ENCODE measurements at regions of chr2 and their contacts with region 1.

Region 1: GRCh38 chr2:119011162-119011909 is 69.3 kb downstream of the MARCO start:
- DNase-seq: peak; percentile 58
- ATAC-seq: no peak
- H3K4me3 Mint-ChIP-seq: no peak overlapping the region
- H3K27ac Mint-ChIP-seq: no peak overlapping the region
- H3K4me1 Mint-ChIP-seq: no peaks in the 10 kb centered on the region
- H3K27me3 Mint-ChIP-seq: peaks cover 25% of the 10 kb centered on the region

Region 2: GRCh38 chr2:118112771-118113334 is 898.5 kb before region 1 on chr2:
- CTCF ChIA-PET with region 1: no interaction called
- POLR2A ChIA-PET with region 1: no interaction called
- intact Hi-C with region 1: no loop called
- DNase-seq: no peak
- ATAC-seq: no peak
- H3K4me3 Mint-ChIP-seq: no peak overlapping the region
- H3K27ac Mint-ChIP-seq: peak overlapping the region; percentile 27
- H3K4me1 Mint-ChIP-seq: peaks cover 10% of the 10 kb centered on the region
- H3K27me3 Mint-ChIP-seq: no peaks in the 10 kb centered on the region

Region 3: DNA sequence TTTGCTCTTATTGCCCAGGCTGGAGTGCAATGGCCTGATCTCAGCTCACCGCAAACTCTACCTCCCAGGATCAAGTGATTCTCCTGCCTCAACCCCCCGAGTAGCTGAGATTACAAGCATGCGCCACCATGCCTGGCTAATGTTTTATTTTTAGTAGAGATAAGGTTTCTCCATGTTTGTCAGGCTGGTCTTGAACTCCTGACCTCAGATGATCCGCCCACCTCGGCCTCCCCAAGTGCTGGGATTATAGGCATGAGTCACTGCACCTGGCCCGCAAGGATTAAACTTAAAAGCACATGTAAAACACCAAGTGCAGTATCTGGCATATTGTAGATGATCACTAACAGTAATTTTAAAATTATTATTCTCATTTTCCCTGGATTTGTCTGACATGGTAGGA is 74.3 kb after region 1 on chr2:
- CTCF ChIA-PET with region 1: no interaction called
- POLR2A ChIA-PET with region 1: no interaction called
- intact Hi-C with region 1: no loop called
- DNase-seq: no peak
- ATAC-seq: no peak
- H3K4me3 Mint-ChIP-seq: no peak overlapping the region
- H3K27ac Mint-ChIP-seq: no peak overlapping the region
- H3K4me1 Mint-ChIP-seq: no peaks in the 10 kb centered on the region
- H3K27me3 Mint-ChIP-seq: peaks cover 2% of the 10 kb centered on the region

Region 4: GRCh38 chr2:119174216-119175037 is 163.1 kb after region 1 on chr2:
- CTCF ChIA-PET with region 1: interaction called, 4 read pairs
- POLR2A ChIA-PET with region 1: no interaction called
- intact Hi-C with region 1: loop called (anchors 5 to 10 kb)
- DNase-seq: peak; percentile 77
- ATAC-seq: peak; percentile 57
- H3K4me3 Mint-ChIP-seq: no peak overlapping the region
- H3K27ac Mint-ChIP-seq: no peak overlapping the region
- H3K4me1 Mint-ChIP-seq: no peaks in the 10 kb centered on the region
- H3K27me3 Mint-ChIP-seq: no peaks in the 10 kb centered on the region

Region 5: GRCh38 chr2:119264781-119265692 is 253.7 kb after region 1 on chr2:
- CTCF ChIA-PET with region 1: no interaction called
- POLR2A ChIA-PET with region 1: no interaction called
- intact Hi-C with region 1: loop called in 1 of 2 experiments (anchors 5 kb)
- DNase-seq: peak; percentile 62
- ATAC-seq: peak; percentile 74
- H3K4me3 Mint-ChIP-seq: no peak overlapping the region
- H3K27ac Mint-ChIP-seq: no peak overlapping the region
- H3K4me1 Mint-ChIP-seq: no peaks in the 10 kb centered on the region
- H3K27me3 Mint-ChIP-seq: no peaks in the 10 kb centered on the region

Region 6: DNA sequence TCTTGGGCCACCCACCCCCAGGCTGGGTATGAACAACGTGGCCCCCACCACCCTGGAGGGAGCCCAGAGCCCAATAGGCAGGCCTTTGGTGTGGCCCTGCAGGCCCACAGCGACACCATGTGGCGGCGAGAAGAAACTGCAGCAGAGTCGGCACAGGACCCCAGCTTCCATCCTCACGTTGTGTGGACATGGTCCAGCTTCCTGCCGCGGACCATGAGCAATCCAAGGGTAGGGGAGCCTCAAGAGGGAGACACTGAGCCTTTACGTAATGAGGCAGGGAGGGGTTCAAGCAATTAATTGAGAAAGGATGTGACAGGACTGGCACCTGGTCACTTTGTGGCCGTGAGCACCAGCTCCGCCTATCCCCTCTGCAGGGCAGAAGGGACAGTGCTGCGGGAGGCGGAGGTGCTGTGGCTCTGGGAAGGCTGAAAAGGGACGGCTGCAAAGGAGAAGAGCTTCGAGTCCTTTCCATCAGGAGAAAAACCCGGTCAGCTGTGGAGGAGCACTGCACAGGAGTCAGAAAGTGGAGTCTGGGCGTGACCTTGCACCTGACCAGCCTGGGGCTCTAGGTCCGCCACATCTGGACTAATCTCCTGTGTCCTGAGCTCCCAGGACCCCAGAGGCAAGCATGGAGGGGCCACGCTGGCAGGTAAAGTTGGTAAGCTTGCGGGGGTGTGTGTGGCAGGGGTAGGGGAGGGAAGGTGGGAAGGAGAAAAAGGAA is 465.1 kb after region 1 on chr2:
- CTCF ChIA-PET with region 1: no interaction called
- POLR2A ChIA-PET with region 1: no interaction called
- intact Hi-C with region 1: loop called in 1 of 2 experiments (anchors 10 kb)
- DNase-seq: peak; percentile 60
- ATAC-seq: peak; percentile 79
- H3K4me3 Mint-ChIP-seq: no peak overlapping the region
- H3K27ac Mint-ChIP-seq: no peak overlapping the region
- H3K4me1 Mint-ChIP-seq: no peaks in the 10 kb centered on the region
- H3K27me3 Mint-ChIP-seq: peaks cover 8% of the 10 kb centered on the region

Measured in activated CD4-positive, alpha-beta T cell treated with anti-CD3 and anti-CD28 coated beads for 36 hours (primary cell).